Colonic mucosa (tissue), 4 donors: ENCODE measurements at regions of chr1 and their contacts with region 1.

Region 1: DNA sequence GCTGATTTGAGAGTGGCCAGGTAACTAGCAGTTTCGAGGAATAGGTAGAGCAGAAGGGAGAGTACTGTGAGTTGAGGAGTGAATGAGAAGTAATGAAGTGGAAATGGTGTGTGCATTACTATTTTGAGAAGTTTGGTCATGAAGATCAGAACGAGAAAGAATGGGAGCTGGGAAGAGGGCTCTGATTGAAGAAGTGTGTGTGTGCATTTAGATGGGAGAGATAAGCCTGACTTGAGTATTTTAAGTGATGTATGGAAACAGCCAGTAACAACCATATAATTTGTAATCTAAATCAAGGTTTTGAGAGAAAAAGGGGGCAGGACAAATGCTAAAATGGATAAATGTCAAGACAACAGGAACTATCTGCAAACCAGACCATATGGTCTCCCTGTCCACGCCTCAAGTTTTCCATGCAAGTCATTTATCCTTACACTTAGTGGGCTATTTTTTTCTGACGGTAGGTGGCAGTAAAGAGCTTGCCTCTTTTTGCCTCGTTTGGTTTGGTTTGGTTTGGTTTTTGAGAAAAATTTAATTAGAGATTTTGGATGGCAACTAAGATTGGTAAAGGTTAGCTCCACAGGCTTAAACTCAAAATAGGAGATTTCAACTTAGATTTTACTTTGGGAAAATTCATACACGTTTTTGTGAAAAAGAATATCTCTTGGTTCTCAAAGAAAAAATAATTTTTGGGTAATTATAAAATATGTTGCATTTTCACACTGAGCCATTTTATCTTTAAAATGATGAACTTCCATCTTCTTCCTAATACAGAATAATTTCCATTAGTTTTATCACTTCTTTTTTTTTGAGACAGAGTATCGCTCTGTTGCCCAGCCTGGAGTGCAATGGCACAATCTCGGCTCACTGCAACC is 9.5 kb upstream of the B3GALNT2 start:
- DNase-seq: peak; percentile 64
- H3K4me3 ChIP-seq: no peak overlapping the region
- H3K27ac ChIP-seq: no peak overlapping the region
- H3K4me1 ChIP-seq: no peaks in the 10 kb centered on the region
- H3K27me3 ChIP-seq: no peaks in the 10 kb centered on the region
- CTCF ChIP-seq: peak; percentile 92

Region 2: GRCh38 chr1:235739124-235739523 is 225.4 kb after region 1 on chr1:
- intact Hi-C with region 1: loop called (anchors 10 kb)
- DNase-seq: no peak
- H3K4me3 ChIP-seq: no peak overlapping the region
- H3K27ac ChIP-seq: no peak overlapping the region
- H3K4me1 ChIP-seq: no peaks in the 10 kb centered on the region
- H3K27me3 ChIP-seq: no peaks in the 10 kb centered on the region
- CTCF ChIP-seq: no peak

Region 3: GRCh38 chr1:235783148-235783776 is 269.5 kb after region 1 on chr1:
- intact Hi-C with region 1: loop called (anchors 5 kb)
- DNase-seq: no peak
- H3K4me3 ChIP-seq: no peak overlapping the region
- H3K27ac ChIP-seq: no peak overlapping the region
- H3K4me1 ChIP-seq: no peaks in the 10 kb centered on the region
- H3K27me3 ChIP-seq: no peaks in the 10 kb centered on the region
- CTCF ChIP-seq: peak; percentile 25

Region 4: DNA sequence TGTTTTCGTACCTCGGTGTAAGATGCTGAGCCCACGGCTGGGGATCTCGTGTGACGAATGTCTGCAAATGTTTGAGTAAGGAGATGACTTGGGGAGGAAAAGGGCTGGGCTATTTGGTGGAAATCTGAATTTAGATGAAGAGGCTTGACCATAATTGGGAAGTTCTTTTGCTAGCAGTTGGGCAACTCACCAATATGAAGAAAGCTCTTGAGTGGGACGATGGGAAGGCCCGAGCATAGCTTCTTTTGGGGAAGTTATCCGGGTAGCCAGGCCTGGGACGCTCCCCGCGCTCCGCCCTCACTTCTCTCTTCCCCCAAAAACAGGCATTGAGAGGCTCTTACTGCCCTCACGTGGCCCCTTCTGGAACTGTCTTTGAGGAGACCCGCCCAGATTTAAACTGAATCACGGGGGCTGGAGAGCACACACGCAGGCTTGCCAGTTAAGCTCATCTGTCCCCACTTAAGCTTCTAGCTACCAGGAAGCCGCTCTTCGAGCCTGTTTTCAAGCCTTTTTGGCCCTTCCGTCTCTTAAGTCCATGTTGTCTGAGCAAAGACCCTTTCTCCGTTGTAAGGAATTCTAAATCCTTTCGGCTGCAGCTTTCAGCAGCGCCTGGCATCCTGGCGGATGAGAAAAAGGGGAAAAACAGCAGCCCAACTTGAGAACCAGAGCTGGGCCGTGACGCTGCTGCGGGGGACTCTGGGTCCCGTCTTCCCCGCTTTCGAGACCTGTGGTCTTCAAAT is 458.0 kb after region 1 on chr1:
- intact Hi-C with region 1: loop called (anchors 5 kb)
- DNase-seq: peak; percentile 94
- H3K4me3 ChIP-seq: no peak overlapping the region
- H3K27ac ChIP-seq: peak overlapping the region; percentile 62
- H3K4me1 ChIP-seq: no peaks in the 10 kb centered on the region
- H3K27me3 ChIP-seq: no peaks in the 10 kb centered on the region
- CTCF ChIP-seq: peak; percentile 84